GM12878 (cell line): ENCODE measurements at regions of chr19 and their contacts with region 1.

Region 1: GRCh38 chr19:48637170-48637947 is at the start of gene DBP:
- DNase-seq: peak; percentile 96
- ATAC-seq: peak; percentile 85
- H3K4me3 ChIP-seq: peak within 1 kb of the TSS; percentile 89
- H3K27ac ChIP-seq: peak within 1 kb of the TSS; percentile 93
- H3K4me1 ChIP-seq: peaks cover 28% of the 10 kb centered on the region
- H3K27me3 ChIP-seq: no peaks in the 10 kb centered on the region
- CTCF ChIP-seq: no peak; a peak in 1 of 6 replicates
- EP300 ChIP-seq: no peak; a peak in 2 of 4 replicates
- POLR2A ChIP-seq: peak; percentile 65; the same call in 1 of the 2 replicates
- RAD21 ChIP-seq: no peak
- polyA plus RNA-seq, gene DBP: 2.0 to 2.6 TPM

Region 2: GRCh38 chr19:48618916-48619691 is 18.3 kb before region 1 on chr19 and contains the starts of genes RPL18 and SPHK2:
- CTCF ChIA-PET with region 1: interaction called, 9 read pairs
- POLR2A ChIA-PET with region 1: interaction called, 62 read pairs
- RAD21 ChIA-PET with region 1: interaction called, 15 read pairs
- SMC1A ChIA-PET with region 1: interaction called, 22 read pairs
- in situ Hi-C with region 1: no loop called
- intact Hi-C with region 1: no loop called
- DNase-seq: peak; percentile 98
- ATAC-seq: peak; percentile 85
- H3K4me3 ChIP-seq: peak within 1 kb of the TSS; percentile 99
- H3K27ac ChIP-seq: peak within 1 kb of the TSS; percentile 95
- H3K4me1 ChIP-seq: peaks cover 24% of the 10 kb centered on the region
- H3K27me3 ChIP-seq: no peaks in the 10 kb centered on the region
- CTCF ChIP-seq: no peak; a peak in 1 of 6 replicates
- EP300 ChIP-seq: no peak
- POLR2A ChIP-seq: peak; percentile 99
- RAD21 ChIP-seq: no peak
- polyA plus RNA-seq, gene RPL18: 393 to 844 TPM
- polyA plus RNA-seq, gene SPHK2: 0.37 to 0.75 TPM

Region 3: GRCh38 chr19:48624067-48624594 is 13.2 kb before region 1 on chr19:
- CTCF ChIA-PET with region 1: interaction called, 9 read pairs
- POLR2A ChIA-PET with region 1: interaction called, 62 read pairs
- RAD21 ChIA-PET with region 1: interaction called, 15 read pairs
- SMC1A ChIA-PET with region 1: interaction called, 22 read pairs
- in situ Hi-C with region 1: no loop called
- intact Hi-C with region 1: no loop called
- DNase-seq: peak; percentile 81
- ATAC-seq: peak; percentile 91
- H3K4me3 ChIP-seq: peak overlapping the region; percentile 72
- H3K27ac ChIP-seq: peak overlapping the region; percentile 67
- H3K4me1 ChIP-seq: peaks cover 19% of the 10 kb centered on the region
- H3K27me3 ChIP-seq: no peaks in the 10 kb centered on the region
- CTCF ChIP-seq: no peak
- EP300 ChIP-seq: no peak
- POLR2A ChIP-seq: peak; percentile 64
- RAD21 ChIP-seq: no peak